ENCODE measurements at regions of chr1 and their contacts with region 1.

Region 1: GRCh38 chr1:93179886-93180722 is at the start of gene TMED5:
- DNase-seq: peak; percentile 98
- ATAC-seq: peak; percentile 91
- H3K4me3 ChIP-seq: peak within 1 kb of the TSS; percentile 76
- H3K27ac ChIP-seq: peak within 1 kb of the TSS; percentile 91
- H3K4me1 ChIP-seq: no peaks in the 10 kb centered on the region
- H3K27me3 ChIP-seq: no peaks in the 10 kb centered on the region
- CTCF ChIP-seq: 0 out of 2 replicates have a peak, but pooled peaks have one; percentile 11
- POLR2A ChIP-seq: peak; percentile 95
- RAD21 ChIP-seq: no peak
- total RNA-seq, gene TMED5: 20.1 and 53.3 TPM in 2 replicates

Region 2: DNA sequence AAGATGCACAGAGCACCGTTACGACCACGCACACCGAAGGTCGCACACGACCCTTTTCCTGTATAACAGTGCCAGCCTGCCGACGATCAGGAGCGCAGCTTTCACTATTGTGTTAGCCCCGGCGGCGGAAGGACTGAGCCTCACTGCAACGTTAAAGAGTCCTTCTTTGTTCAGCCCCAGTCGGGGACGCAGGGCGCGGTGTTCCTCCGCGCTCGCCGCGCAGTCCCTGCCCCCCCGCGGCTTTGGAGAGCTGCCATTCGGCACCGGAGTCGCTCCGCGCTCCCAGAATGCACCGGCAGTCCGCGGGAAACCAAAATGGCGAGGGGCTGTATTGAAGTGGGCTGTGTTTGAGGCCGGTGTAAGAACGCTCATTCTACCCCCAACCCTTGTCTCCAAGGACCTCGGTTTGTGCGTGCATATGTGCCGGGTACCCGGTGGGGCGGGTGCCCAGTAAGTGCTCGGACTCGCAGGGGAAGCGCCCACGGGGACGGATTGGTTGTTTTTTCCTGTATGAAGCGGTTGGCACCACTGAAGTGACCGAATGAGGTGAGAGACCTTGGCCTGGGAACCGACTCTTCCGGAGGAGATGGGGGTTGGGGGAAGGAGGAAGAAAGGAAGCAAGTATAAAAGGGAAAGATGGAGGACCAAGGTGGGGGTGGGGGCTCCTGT is 101.0 kb before region 1 on chr1 and contains the start of gene MTF2:
- CTCF ChIA-PET with region 1: no interaction called
- POLR2A ChIA-PET with region 1: interaction called, 4 read pairs
- dilution Hi-C with region 1: no loop called
- in situ Hi-C with region 1: no loop called
- intact Hi-C with region 1: loop called (anchors 2 kb)
- DNase-seq: peak; percentile 97
- ATAC-seq: peak; percentile 88
- H3K4me3 ChIP-seq: peak within 1 kb of the TSS; percentile 78
- H3K27ac ChIP-seq: peak within 1 kb of the TSS; percentile 77
- H3K4me1 ChIP-seq: no peaks in the 10 kb centered on the region
- H3K27me3 ChIP-seq: no peaks in the 10 kb centered on the region; the same call in 1 of the 2 replicates
- CTCF ChIP-seq: no peak
- POLR2A ChIP-seq: peak; percentile 91
- RAD21 ChIP-seq: 0 out of 2 replicates have a peak, but pooled peaks have one; percentile 3
- total RNA-seq, gene MTF2: 33.3 and 39.8 TPM in 2 replicates

Region 3: GRCh38 chr1:93102142-93102541 is 78.0 kb before region 1 on chr1:
- CTCF ChIA-PET with region 1: no interaction called
- POLR2A ChIA-PET with region 1: no interaction called
- dilution Hi-C with region 1: no loop called
- in situ Hi-C with region 1: no loop called
- intact Hi-C with region 1: loop called (anchors 5 kb)
- DNase-seq: no peak
- ATAC-seq: no peak
- H3K4me3 ChIP-seq: no peak overlapping the region
- H3K27ac ChIP-seq: no peak overlapping the region
- H3K4me1 ChIP-seq: no peaks in the 10 kb centered on the region
- H3K27me3 ChIP-seq: no peaks in the 10 kb centered on the region
- CTCF ChIP-seq: no peak
- POLR2A ChIP-seq: no peak
- RAD21 ChIP-seq: no peak

Region 4: DNA sequence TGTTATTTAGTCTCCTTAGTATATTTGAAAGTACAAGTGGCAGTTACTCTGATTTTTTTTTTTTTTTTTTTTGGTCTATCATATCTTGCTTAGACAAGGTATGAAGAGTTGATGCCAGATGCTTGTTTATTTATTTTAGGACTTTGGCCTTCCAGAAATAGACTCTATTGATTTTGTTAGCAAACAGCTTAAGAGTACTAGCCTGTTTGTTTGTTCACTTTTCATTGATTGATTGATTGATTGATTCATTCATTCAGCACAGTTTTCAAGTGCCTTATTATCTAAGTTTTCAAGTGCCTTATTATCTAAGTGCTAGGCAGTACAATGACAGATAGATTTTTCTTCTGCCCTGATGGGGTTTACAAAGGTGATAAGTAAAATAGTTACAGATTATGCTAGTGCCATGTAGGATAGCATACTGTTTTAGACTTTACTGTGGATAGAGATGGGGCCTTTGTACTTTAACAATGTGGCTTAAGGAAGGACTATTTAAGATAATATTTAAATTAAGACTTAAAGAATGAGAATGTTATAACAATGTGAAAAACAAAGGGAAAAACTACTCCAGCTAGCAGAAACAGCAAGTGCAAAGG is 50.5 kb before region 1 on chr1:
- CTCF ChIA-PET with region 1: no interaction called
- POLR2A ChIA-PET with region 1: no interaction called
- dilution Hi-C with region 1: no loop called
- in situ Hi-C with region 1: no loop called
- intact Hi-C with region 1: loop called (anchors 5 kb)
- DNase-seq: no peak
- ATAC-seq: no peak
- H3K4me3 ChIP-seq: no peak overlapping the region
- H3K27ac ChIP-seq: no peak overlapping the region
- H3K4me1 ChIP-seq: no peaks in the 10 kb centered on the region
- H3K27me3 ChIP-seq: no peaks in the 10 kb centered on the region
- CTCF ChIP-seq: no peak
- POLR2A ChIP-seq: no peak
- RAD21 ChIP-seq: no peak

Region 5: GRCh38 chr1:93235271-93235670 is 55.2 kb after region 1 on chr1:
- CTCF ChIA-PET with region 1: no interaction called
- POLR2A ChIA-PET with region 1: interaction called, 10 read pairs
- dilution Hi-C with region 1: no loop called
- in situ Hi-C with region 1: no loop called
- intact Hi-C with region 1: no loop called
- DNase-seq: no peak
- ATAC-seq: no peak
- H3K4me3 ChIP-seq: no peak overlapping the region
- H3K27ac ChIP-seq: no peak overlapping the region
- H3K4me1 ChIP-seq: no peaks in the 10 kb centered on the region
- H3K27me3 ChIP-seq: no peaks in the 10 kb centered on the region
- CTCF ChIP-seq: no peak
- POLR2A ChIP-seq: no peak
- RAD21 ChIP-seq: no peak

Region 6: GRCh38 chr1:93345633-93346420 is 165.7 kb after region 1 on chr1 and contains the start of gene DR1:
- CTCF ChIA-PET with region 1: no interaction called
- POLR2A ChIA-PET with region 1: no interaction called
- dilution Hi-C with region 1: no loop called
- in situ Hi-C with region 1: no loop called
- intact Hi-C with region 1: loop called (anchors 2 kb)
- DNase-seq: peak; percentile 95
- ATAC-seq: peak; percentile 90
- H3K4me3 ChIP-seq: peak within 1 kb of the TSS; percentile 83
- H3K27ac ChIP-seq: peak within 1 kb of the TSS; percentile 93
- H3K4me1 ChIP-seq: peaks cover 3% of the 10 kb centered on the region; the same call in 1 of the 2 replicates
- H3K27me3 ChIP-seq: no peaks in the 10 kb centered on the region
- CTCF ChIP-seq: no peak
- POLR2A ChIP-seq: peak; percentile 91
- RAD21 ChIP-seq: no peak
- total RNA-seq, gene DR1: 39.4 and 46.9 TPM in 2 replicates

Measured in IMR-90 (cell line).